CD8-positive, alpha-beta T cell (primary cell): ENCODE measurements at regions of chr5 and their contacts with region 1.

Region 1: GRCh38 chr5:176573564-176574296 is 24.6 kb downstream of the CDHR2 start:
- DNase-seq: peak; percentile 53 to 91 (median 77)
- ATAC-seq: peak; percentile 86
- H3K4me3 ChIP-seq: no peak overlapping the region
- H3K4me3 Mint-ChIP-seq: no peak overlapping the region
- H3K27ac ChIP-seq: no peak overlapping the region
- H3K27ac Mint-ChIP-seq: no peak overlapping the region
- H3K4me1 ChIP-seq: peaks cover 4% of the 10 kb centered on the region
- H3K4me1 Mint-ChIP-seq: peaks cover 4% of the 10 kb centered on the region
- H3K27me3 ChIP-seq: peaks cover 0 to 4% of the 10 kb centered on the region in 2 experiments
- H3K27me3 Mint-ChIP-seq: peaks cover 4% of the 10 kb centered on the region
- CTCF ChIP-seq: peak; percentile 72

Region 2: DNA sequence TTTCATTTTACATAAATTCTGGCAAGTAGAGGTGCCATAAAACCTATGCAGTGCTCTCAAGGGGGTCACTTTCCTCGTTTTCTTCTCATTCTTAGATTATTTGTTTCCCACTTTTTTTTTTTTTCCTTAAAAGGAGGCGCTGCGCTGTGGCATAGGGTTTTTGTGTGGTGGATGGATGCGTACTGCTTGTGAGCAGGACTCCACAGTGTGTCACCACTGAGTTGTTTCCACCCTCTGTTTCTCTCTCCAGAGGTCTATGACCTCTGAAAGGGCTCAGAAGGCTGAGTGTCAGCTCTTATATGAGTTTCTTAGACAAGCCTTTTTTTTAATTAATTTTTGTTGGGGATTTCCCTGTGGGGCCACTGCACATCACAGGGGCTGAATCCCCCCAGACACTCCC is 143.8 kb before region 1 on chr5:
- CTCF ChIA-PET with region 1: no interaction called
- POLR2A ChIA-PET with region 1: no interaction called
- intact Hi-C with region 1: no loop called
- DNase-seq: peak in 2 of 9 experiments; percentile 14 to 26
- ATAC-seq: no peak
- H3K4me3 ChIP-seq: no peak overlapping the region
- H3K4me3 Mint-ChIP-seq: no peak overlapping the region
- H3K27ac ChIP-seq: no peak overlapping the region
- H3K27ac Mint-ChIP-seq: no peak overlapping the region
- H3K4me1 ChIP-seq: peaks cover 8% of the 10 kb centered on the region
- H3K4me1 Mint-ChIP-seq: peaks cover 7% of the 10 kb centered on the region
- H3K27me3 ChIP-seq: no peaks in the 10 kb centered on the region
- H3K27me3 Mint-ChIP-seq: no peaks in the 10 kb centered on the region
- CTCF ChIP-seq: no peak

Region 3: GRCh38 chr5:176447982-176448608 is 125.6 kb before region 1 on chr5 and contains the start of gene FAF2:
- CTCF ChIA-PET with region 1: interaction called, 7 read pairs
- POLR2A ChIA-PET with region 1: no interaction called
- intact Hi-C with region 1: loop called in 1 of 2 experiments (anchors 1 kb)
- DNase-seq: peak; percentile 94 to 100 (median 98)
- ATAC-seq: peak; percentile 96
- H3K4me3 ChIP-seq: peak within 1 kb of the TSS; percentile 75 to 86
- H3K4me3 Mint-ChIP-seq: peak within 1 kb of the TSS; percentile 99
- H3K27ac ChIP-seq: peak within 1 kb of the TSS; percentile 89 to 90
- H3K27ac Mint-ChIP-seq: peak within 1 kb of the TSS; percentile 99
- H3K4me1 ChIP-seq: peaks cover 26% of the 10 kb centered on the region
- H3K4me1 Mint-ChIP-seq: peaks cover 38% of the 10 kb centered on the region
- H3K27me3 ChIP-seq: no peaks in the 10 kb centered on the region
- H3K27me3 Mint-ChIP-seq: no peaks in the 10 kb centered on the region
- CTCF ChIP-seq: peak; percentile 92
- total RNA-seq, gene FAF2: 24.7 to 24.8 TPM

Region 4: DNA sequence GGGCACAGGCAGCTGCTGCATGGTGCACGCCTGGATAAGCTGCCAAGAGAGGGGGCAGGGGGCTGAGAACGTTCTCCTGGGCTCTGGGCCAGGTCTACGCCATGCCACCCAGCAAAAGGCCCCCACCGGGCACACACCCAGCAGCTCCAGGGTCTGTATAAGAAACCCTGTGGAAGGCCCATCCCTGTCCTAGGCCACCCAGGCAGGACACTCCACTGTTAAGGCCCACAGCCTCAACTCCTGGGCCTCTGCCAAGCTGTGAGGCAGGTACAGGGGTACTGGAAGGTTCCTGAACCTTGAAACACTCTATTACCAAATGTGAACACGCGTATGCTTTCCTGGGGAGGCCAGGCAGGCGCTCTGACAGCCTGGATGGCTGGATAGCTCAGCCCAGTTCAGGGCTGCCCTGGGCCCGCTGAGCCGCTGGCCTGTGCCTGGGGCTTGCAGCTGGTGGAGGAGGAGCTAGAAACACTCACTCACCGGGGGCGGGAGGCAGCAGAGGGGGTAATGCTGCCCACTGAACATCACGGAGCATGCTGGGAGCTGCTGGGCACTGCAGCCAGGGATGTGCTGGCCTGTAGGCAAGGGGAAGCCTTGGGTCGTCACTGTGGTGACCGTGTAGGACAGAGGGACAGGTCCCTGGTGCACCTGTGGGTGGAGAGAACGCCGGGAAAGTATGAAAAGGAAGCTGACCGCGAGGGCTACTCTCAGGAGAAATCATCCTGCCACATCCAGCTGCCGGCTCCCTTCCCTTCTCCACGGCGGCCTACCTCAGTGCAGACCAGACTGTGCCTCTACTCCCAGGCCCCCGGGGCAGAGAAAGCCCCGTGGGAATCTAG is 42.5 kb before region 1 on chr5:
- CTCF ChIA-PET with region 1: interaction called, 6 read pairs
- POLR2A ChIA-PET with region 1: no interaction called
- intact Hi-C with region 1: loop called in 1 of 2 experiments (anchors 2 kb)
- DNase-seq: peak in 3 of 9 experiments; percentile 28 to 42 (median 32)
- ATAC-seq: no peak
- H3K4me3 ChIP-seq: peak overlapping the region; percentile 41 to 46
- H3K4me3 Mint-ChIP-seq: peak overlapping the region; percentile 78
- H3K27ac ChIP-seq: peak overlapping the region; percentile 32 to 69
- H3K27ac Mint-ChIP-seq: peak overlapping the region; percentile 91
- H3K4me1 ChIP-seq: peaks cover 79% of the 10 kb centered on the region
- H3K4me1 Mint-ChIP-seq: peaks cover 65% of the 10 kb centered on the region
- H3K27me3 ChIP-seq: no peaks in the 10 kb centered on the region
- H3K27me3 Mint-ChIP-seq: no peaks in the 10 kb centered on the region
- CTCF ChIP-seq: no peak

Region 5: GRCh38 chr5:176553262-176554077 is 20.3 kb before region 1 on chr5:
- CTCF ChIA-PET with region 1: interaction called, 14 read pairs
- POLR2A ChIA-PET with region 1: no interaction called
- intact Hi-C with region 1: no loop called
- DNase-seq: no peak
- ATAC-seq: no peak
- H3K4me3 ChIP-seq: no peak overlapping the region
- H3K4me3 Mint-ChIP-seq: no peak overlapping the region
- H3K27ac ChIP-seq: no peak overlapping the region
- H3K27ac Mint-ChIP-seq: peak overlapping the region; percentile 74
- H3K4me1 ChIP-seq: peaks cover 56% of the 10 kb centered on the region
- H3K4me1 Mint-ChIP-seq: peaks cover 47% of the 10 kb centered on the region
- H3K27me3 ChIP-seq: no peaks in the 10 kb centered on the region
- H3K27me3 Mint-ChIP-seq: no peaks in the 10 kb centered on the region
- CTCF ChIP-seq: no peak

Region 6: DNA sequence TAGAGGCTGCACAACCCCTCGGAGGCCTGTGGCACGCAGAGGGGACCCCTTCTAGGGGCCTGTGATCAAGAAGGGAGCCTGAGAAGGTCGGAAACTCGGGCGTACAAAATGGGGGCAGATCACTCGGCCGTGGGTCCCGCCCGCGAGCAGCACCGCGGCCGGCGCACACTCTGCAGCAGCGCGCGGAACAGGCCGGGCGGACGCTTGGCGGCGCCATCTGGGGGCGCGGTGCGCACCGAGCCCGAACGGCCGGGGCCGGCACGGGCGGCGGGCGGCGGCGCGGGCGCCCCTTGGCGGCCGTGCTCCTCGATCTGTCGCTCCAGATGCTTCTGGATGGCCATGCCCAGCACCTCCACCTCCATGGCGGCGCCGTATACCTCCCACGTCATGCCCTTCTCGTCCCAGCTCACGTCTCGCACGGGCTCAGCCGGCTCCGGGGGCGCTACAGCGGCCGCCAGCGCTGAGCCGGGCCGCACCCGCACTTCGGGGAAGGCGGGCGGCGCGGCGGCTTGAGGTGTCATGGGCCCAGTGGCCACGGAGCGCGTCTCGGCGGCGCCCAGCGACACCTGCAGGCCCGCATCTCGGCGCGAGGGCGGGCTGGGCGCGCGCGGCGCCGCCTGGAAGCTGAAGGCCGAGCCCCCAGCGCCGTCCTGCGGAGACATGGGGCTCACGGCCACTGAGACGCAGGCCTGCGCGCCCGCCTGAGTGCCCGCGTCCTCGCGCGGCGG is 23.1 kb after region 1 on chr5:
- CTCF ChIA-PET with region 1: interaction called, 13 read pairs
- POLR2A ChIA-PET with region 1: no interaction called
- intact Hi-C with region 1: no loop called
- DNase-seq: peak; percentile 44 to 84 (median 66)
- ATAC-seq: peak; percentile 81
- H3K4me3 ChIP-seq: peak overlapping the region; percentile 36 to 52
- H3K4me3 Mint-ChIP-seq: peak overlapping the region; percentile 77
- H3K27ac ChIP-seq: no peak overlapping the region
- H3K27ac Mint-ChIP-seq: no peak overlapping the region
- H3K4me1 ChIP-seq: peaks cover 9% of the 10 kb centered on the region
- H3K4me1 Mint-ChIP-seq: peaks cover 7% of the 10 kb centered on the region
- H3K27me3 ChIP-seq: no peaks in the 10 kb centered on the region
- H3K27me3 Mint-ChIP-seq: no peaks in the 10 kb centered on the region
- CTCF ChIP-seq: no peak

Region 7: DNA sequence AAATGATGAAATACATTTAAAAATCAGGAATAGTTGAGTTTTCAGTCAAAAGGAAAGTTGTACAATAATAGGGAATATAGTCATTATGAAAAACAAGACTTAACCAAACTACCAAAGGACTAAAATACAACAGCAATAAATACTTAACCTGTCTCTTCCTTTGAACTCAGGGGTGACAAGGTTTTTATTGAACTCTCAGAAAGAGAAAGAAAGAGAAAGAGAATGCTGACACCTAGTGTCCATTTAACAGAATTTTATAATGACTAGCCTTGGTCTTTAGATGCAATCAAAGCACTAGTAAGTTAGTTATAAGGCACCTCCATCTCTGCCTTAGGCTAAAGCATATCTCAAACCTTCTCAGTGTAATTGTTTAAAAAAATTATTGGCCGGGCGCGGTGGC is 385.3 kb after region 1 on chr5:
- CTCF ChIA-PET with region 1: no interaction called
- POLR2A ChIA-PET with region 1: no interaction called
- intact Hi-C with region 1: loop called in 1 of 2 experiments (anchors 2 kb)
- DNase-seq: peak in 2 of 9 experiments; percentile 51 to 64
- ATAC-seq: peak; percentile 64
- H3K4me3 ChIP-seq: no peak overlapping the region
- H3K4me3 Mint-ChIP-seq: no peak overlapping the region
- H3K27ac ChIP-seq: no peak overlapping the region
- H3K27ac Mint-ChIP-seq: no peak overlapping the region
- H3K4me1 ChIP-seq: no peaks in the 10 kb centered on the region
- H3K4me1 Mint-ChIP-seq: peaks cover 6% of the 10 kb centered on the region
- H3K27me3 ChIP-seq: no peaks in the 10 kb centered on the region
- H3K27me3 Mint-ChIP-seq: no peaks in the 10 kb centered on the region
- CTCF ChIP-seq: peak; percentile 56

Region 8: GRCh38 chr5:178241231-178241663 is 1667.5 kb after region 1 on chr5:
- CTCF ChIA-PET with region 1: no interaction called
- POLR2A ChIA-PET with region 1: no interaction called
- intact Hi-C with region 1: no loop called
- DNase-seq: peak in 3 of 9 experiments; percentile 22 to 54 (median 40)
- ATAC-seq: no peak
- H3K4me3 ChIP-seq: peak overlapping the region in 1 of 2 experiments; percentile 31
- H3K4me3 Mint-ChIP-seq: peak overlapping the region; percentile 67
- H3K27ac ChIP-seq: peak overlapping the region in 1 of 2 experiments; percentile 76
- H3K27ac Mint-ChIP-seq: peak overlapping the region; percentile 89
- H3K4me1 ChIP-seq: peaks cover 56% of the 10 kb centered on the region
- H3K4me1 Mint-ChIP-seq: peaks cover 57% of the 10 kb centered on the region
- H3K27me3 ChIP-seq: no peaks in the 10 kb centered on the region
- H3K27me3 Mint-ChIP-seq: no peaks in the 10 kb centered on the region
- CTCF ChIP-seq: no peak